PC-9 (cell line): ENCODE measurements at regions of chr5 and their contacts with region 1.

Region 1: DNA sequence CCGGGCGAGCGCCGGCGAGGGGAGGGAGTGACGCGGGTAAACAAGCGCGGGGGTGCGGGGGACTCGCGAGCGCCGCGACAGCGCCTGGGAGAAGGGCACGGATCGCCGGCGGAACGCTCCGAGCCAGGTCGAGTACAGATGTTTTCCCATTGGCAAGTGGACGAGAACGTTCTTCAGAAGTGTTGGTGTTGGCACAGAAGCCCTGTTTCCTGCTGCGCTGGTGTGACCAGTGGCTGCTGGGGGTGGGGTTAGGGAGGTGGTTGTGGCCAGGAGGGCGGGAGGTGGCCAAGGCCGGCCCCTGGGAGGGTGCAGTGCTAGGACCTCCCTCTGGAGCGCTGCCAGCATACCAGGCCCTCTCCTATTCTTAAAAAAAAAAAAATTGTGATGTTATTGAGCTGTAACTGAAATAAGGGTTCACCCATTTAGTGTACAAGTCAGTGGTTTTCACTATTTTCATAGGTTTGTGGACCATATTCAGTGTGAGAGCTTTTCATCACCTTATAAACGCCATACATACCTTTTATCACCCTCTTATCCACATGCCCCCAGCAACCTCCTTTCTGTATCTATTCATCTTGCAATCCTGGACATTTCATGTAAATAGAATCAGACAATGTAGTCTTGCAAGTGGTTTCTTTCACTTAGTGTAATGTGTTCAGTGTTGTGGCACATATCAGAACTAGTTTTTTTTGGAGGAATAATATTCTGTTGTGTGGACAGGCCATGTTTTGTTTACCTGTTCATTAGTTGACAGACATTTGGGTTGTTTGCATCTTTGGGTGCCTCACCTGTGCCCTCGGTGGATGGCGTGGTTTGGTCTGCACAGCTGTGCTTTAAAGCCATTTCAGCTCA is 1.1 kb downstream of the SQSTM1 start:
- DNase-seq: peak; percentile 80 to 95
- H3K4me3 ChIP-seq: peak overlapping the region; percentile 98
- H3K27ac ChIP-seq: peak overlapping the region; percentile 100
- H3K4me1 ChIP-seq: peaks cover 55% of the 10 kb centered on the region
- H3K27me3 ChIP-seq: no peaks in the 10 kb centered on the region
- CTCF ChIP-seq: no peak

Region 2: DNA sequence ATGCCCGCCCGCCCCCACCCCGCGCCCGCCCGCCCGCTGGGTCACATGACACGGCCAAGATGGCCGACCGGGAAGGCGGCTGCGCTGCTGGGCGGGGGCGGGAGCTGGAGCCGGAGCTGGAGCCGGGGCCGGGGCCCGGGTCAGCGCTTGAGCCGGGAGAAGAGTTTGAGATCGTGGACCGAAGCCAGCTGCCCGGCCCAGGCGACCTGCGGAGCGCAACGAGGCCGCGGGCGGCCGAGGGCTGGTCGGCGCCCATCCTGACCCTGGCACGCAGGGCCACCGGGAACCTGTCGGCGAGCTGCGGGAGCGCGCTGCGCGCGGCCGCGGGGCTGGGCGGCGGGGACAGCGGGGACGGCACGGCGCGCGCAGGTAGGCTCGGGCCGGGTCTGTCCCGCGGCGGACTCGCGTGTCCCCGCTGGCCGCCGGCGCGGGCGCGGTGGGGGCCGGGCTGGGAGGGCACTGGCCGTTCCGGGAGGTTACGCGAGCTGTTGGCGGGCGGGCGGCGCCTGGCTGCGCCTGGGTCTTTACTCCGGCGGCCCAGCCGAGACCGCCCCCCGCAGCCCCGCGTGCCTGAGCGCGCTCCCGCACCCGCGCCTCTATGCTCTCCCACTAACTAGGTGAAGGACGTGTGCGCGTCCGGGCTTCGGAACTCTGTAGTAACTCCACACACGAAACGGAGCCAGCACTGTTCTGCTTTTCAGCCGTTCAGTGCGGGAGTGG is 271.1 kb before region 1 on chr5 and contains the start of gene RUFY1:
- CTCF ChIA-PET with region 1: no interaction called
- POLR2A ChIA-PET with region 1: no interaction called
- intact Hi-C with region 1: loop called (anchors 5 kb)
- DNase-seq: peak; percentile 58 to 91
- H3K4me3 ChIP-seq: peak within 1 kb of the TSS; percentile 100
- H3K27ac ChIP-seq: peak within 1 kb of the TSS; percentile 75
- H3K4me1 ChIP-seq: peaks cover 33% of the 10 kb centered on the region
- H3K27me3 ChIP-seq: no peaks in the 10 kb centered on the region
- CTCF ChIP-seq: no peak
- total RNA-seq, gene RUFY1: 63.9 and 72.2 TPM in 2 replicates

Region 3: GRCh38 chr5:179623003-179623880 is 198.6 kb before region 1 on chr5 and contains the start of gene HNRNPH1:
- CTCF ChIA-PET with region 1: interaction called, 3 read pairs
- POLR2A ChIA-PET with region 1: interaction called, 5 read pairs
- intact Hi-C with region 1: loop called (anchors 2 kb)
- DNase-seq: peak; percentile 93 to 99
- H3K4me3 ChIP-seq: peak within 1 kb of the TSS; percentile 95
- H3K27ac ChIP-seq: peak within 1 kb of the TSS; percentile 94
- H3K4me1 ChIP-seq: peaks cover 36% of the 10 kb centered on the region
- H3K27me3 ChIP-seq: no peaks in the 10 kb centered on the region
- CTCF ChIP-seq: 0 out of 2 replicates have a peak, but pooled peaks have one; percentile 28
- total RNA-seq, gene HNRNPH1: 626 and 723 TPM in 2 replicates

Region 4: DNA sequence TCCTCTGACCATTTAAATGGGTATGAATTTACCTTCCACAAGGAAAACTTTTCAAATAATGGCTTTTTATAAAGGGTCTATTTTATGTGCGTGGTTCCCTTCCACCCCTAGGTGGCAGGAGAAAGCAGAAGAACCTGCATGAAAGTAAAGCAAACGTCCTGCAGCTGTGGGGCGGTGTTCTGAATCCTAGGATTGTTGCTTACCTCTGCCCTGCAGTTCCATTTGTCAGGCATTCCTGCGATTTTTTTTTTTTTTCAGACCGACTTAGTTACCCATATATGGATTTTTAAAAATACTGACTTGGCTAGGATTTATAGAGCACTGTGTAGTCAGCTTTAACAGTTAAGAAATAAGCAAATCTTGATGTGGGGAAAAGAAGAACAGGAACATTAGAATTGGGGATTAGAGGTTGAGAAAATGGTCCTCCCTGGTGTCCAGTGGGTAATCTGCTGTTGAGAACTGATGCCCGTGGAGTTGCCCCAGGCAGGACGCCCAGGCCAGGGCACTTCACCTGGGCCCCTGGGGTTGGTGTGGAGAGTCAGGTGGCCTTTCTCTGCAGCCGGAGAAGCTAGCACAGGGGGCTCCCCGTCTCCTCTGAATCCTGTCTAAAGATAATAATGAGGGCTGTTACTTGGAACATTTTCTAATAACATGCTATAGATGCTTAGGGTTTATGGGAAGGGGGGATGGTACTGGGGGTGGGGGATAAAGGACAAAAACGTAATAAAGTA is 58.4 kb before region 1 on chr5:
- CTCF ChIA-PET with region 1: no interaction called
- POLR2A ChIA-PET with region 1: interaction called, 4 read pairs
- intact Hi-C with region 1: loop called (anchors 2 kb)
- DNase-seq: peak; percentile 74
- H3K4me3 ChIP-seq: no peak overlapping the region
- H3K27ac ChIP-seq: peak overlapping the region; percentile 52
- H3K4me1 ChIP-seq: peaks cover 47% of the 10 kb centered on the region
- H3K27me3 ChIP-seq: no peaks in the 10 kb centered on the region
- CTCF ChIP-seq: peak; percentile 91

Region 5: DNA sequence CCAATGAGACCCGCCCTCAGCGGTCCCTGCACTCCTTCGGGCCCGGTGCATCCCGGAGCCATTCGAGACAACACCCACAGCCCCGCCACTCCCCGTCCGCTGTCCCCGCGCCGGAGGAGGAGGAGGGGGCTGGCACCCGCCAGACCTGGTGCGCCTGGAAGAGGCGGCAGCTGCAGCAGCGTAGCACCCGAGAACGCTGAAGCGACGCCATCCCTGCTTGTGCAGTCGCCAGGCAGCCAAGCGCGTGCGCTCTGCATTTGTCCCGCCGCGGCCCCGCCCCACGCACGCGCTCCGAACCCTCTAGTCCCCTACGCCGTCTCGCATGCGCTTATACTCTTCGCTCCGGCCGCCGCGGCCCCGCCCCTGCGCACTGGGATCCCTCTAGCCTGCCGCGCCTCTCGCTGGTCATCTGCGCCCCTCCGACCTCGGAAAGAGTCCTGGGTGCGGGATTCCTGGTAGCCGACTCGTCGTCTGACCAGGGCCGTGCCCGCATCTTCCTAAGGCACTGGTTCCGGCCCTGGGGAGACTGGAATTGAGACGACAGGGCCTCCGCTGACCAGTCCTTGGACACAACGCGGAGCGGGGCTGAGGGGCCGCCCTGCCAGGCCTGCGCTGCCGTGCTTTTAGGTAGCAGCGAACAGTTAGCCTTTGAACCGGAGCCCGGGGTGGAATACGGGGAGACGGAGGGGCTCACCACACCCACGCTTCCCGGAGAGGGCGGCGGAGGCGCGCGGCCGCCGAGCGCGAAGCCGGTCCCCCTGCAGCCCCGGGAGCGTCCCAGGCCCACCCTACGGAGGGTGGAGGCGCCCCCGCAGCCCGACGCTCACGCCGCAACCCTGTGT is 37.0 kb after region 1 on chr5 and contains the start of gene MRNIP:
- CTCF ChIA-PET with region 1: no interaction called
- POLR2A ChIA-PET with region 1: no interaction called
- intact Hi-C with region 1: loop called (anchors 1 kb)
- DNase-seq: peak; percentile 85 to 98
- H3K4me3 ChIP-seq: peak within 1 kb of the TSS; percentile 83
- H3K27ac ChIP-seq: peak within 1 kb of the TSS; percentile 43; the same call in 1 of the 2 replicates
- H3K4me1 ChIP-seq: peaks cover 6% of the 10 kb centered on the region; the same call in 1 of the 2 replicates
- H3K27me3 ChIP-seq: no peaks in the 10 kb centered on the region
- CTCF ChIP-seq: no peak
- total RNA-seq, gene MRNIP: 39.9 and 54.0 TPM in 2 replicates